HCT116 (cell line): ENCODE measurements at regions of chr15 and their contacts with region 1.

Region 1: DNA sequence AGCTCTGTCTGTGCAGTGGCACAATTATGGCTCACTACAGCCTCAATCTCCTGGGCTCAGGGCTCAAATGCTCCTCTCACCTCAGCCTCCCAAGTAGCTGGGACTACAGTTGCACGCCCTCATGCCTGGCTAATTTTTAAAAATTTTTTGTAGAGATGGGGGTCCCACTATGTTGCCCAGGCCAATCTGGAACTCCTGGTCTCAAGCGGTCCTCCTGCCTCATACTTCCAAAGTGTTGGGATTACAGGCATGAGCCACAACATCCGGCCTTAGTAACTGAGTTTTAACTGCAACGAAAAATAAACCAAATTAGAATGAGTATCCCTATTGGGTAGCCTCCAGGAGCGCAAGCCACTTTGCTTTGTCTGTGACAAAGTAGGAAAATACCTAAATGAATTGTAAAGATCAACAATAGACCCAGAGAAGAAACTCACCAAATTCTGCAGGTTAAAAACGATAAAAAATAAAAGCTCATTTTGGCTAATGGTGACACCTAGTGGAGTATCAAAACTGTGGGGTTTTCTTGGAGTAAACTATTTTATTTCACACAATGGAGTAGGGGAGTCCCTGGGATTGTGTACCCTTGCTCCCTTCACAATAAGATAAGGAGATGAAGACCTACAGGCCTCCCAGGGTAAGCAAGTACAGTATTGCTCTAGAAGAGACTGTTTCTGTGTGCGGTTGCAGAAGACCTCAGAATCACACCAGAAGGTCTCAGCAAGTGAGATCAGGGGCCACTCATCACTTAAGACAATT is 21.0 kb upstream of the CA12 start:
- DNase-seq: no peak
- ATAC-seq: peak; percentile 86
- H3K4me3 ChIP-seq: no peak overlapping the region
- H3K27ac ChIP-seq: no peak overlapping the region
- H3K4me1 ChIP-seq: peaks cover 5 to 9% of the 10 kb centered on the region in 2 experiments; a peak in 2 of 4 replicates
- H3K27me3 ChIP-seq: no peaks in the 10 kb centered on the region
- CTCF ChIP-seq: peak; percentile 50 to 76 (median 75)
- POLR2A ChIP-seq: no peak
- RAD21 ChIP-seq: peak; percentile 84

Region 2: GRCh38 chr15:62782039-62782791 is 620.5 kb before region 1 on chr15:
- CTCF ChIA-PET with region 1: no interaction called
- POLR2A ChIA-PET with region 1: no interaction called
- RAD21 ChIA-PET with region 1: no interaction called
- intact Hi-C with region 1: loop called (anchors 1 kb)
- DNase-seq: peak; percentile 56
- ATAC-seq: peak; percentile 98
- H3K4me3 ChIP-seq: no peak overlapping the region
- H3K27ac ChIP-seq: no peak overlapping the region
- H3K4me1 ChIP-seq: no peaks in the 10 kb centered on the region; a peak in 1 of 4 replicates
- H3K27me3 ChIP-seq: no peaks in the 10 kb centered on the region
- CTCF ChIP-seq: peak; percentile 63 to 76 (median 74); a peak in 5 of 6 replicates
- POLR2A ChIP-seq: no peak
- RAD21 ChIP-seq: peak; percentile 89

Region 3: DNA sequence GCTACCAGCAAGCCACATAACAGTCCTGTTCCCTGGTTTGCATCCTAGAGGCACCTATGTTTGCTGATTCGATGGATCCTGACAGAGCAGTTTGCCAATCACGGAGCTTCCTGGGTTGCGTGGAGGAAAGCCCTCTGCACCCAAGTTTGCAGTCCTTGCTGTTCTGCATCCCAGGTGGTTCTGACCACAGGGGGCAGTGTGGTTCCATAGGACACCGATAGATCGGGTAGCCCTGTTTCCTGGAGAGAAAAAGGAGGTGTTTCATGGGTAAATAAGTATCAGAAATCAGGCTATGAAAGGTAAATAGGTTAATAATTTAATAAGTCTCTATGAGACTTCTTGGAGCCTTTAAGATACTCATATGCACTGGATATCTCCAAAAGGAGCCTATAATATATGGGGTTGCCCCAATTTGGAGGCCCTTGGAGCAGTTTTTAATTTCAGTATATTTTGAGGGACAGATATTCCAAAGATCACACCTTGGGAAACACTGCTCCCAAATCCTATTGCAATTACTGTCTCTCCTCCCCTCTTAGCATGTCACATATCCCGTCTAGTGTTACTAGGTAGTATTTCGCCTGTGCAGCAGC is 554.7 kb before region 1 on chr15:
- CTCF ChIA-PET with region 1: interaction called, 3 read pairs
- POLR2A ChIA-PET with region 1: no interaction called
- RAD21 ChIA-PET with region 1: no interaction called
- intact Hi-C with region 1: loop called (anchors 5 kb)
- DNase-seq: peak; percentile 53
- ATAC-seq: peak; percentile 91
- H3K4me3 ChIP-seq: no peak overlapping the region
- H3K27ac ChIP-seq: no peak overlapping the region
- H3K4me1 ChIP-seq: peaks cover 0 to 12% of the 10 kb centered on the region in 2 experiments; a peak in 2 of 4 replicates
- H3K27me3 ChIP-seq: no peaks in the 10 kb centered on the region
- CTCF ChIP-seq: peak; percentile 83 to 93 (median 87)
- POLR2A ChIP-seq: no peak
- RAD21 ChIP-seq: peak; percentile 88

Region 4: DNA sequence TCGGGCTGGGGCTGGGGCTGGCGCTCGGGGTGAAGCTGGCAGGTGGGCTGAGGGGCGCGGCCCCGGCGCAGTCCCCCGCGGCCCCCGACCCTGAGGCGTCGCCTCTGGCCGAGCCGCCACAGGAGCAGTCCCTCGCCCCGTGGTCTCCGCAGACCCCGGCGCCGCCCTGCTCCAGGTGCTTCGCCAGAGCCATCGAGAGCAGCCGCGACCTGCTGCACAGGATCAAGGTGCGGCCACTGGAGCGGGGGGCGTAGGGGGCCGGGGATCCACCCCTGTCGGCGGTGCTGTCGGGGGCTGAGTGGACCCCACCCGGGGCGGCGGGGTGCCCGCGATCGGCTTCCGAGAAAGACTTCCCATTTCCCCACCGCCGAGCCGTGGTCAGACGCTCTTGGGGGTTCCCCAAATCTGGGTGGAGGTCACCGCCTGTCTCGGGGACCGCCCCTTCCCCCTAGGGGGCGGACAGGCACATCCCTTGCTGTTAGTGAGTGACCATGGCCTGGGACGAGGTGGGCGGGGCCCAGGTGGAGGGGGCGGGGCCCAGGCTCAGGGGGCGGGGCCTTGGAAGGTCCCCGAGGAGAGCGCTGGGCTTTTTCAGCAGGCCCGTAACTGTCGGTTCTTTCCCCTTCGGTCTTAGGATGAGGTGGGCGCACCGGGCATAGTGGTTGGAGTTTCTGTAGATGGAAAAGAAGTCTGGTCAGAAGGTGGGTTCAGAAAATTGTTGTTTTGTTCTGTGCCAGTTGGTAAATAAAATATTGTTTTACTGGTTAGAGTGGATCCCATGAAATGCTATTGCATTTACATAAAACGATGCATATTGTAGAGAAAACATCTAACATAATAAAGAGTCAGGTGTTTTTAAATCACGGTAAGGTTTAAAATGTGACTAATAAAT is 280.4 kb before region 1 on chr15:
- CTCF ChIA-PET with region 1: no interaction called
- POLR2A ChIA-PET with region 1: no interaction called
- RAD21 ChIA-PET with region 1: no interaction called
- intact Hi-C with region 1: loop called (anchors 2 kb)
- DNase-seq: peak; percentile 44
- ATAC-seq: peak; percentile 94
- H3K4me3 ChIP-seq: peak overlapping the region; percentile 60 to 76
- H3K27ac ChIP-seq: peak overlapping the region; percentile 59
- H3K4me1 ChIP-seq: peaks cover 0 to 10% of the 10 kb centered on the region in 2 experiments; a peak in 3 of 4 replicates
- H3K27me3 ChIP-seq: no peaks in the 10 kb centered on the region
- CTCF ChIP-seq: peak in 1 of 3 experiments; percentile 14; a peak in 1 of 6 replicates
- POLR2A ChIP-seq: no peak
- RAD21 ChIP-seq: no peak

Region 5: DNA sequence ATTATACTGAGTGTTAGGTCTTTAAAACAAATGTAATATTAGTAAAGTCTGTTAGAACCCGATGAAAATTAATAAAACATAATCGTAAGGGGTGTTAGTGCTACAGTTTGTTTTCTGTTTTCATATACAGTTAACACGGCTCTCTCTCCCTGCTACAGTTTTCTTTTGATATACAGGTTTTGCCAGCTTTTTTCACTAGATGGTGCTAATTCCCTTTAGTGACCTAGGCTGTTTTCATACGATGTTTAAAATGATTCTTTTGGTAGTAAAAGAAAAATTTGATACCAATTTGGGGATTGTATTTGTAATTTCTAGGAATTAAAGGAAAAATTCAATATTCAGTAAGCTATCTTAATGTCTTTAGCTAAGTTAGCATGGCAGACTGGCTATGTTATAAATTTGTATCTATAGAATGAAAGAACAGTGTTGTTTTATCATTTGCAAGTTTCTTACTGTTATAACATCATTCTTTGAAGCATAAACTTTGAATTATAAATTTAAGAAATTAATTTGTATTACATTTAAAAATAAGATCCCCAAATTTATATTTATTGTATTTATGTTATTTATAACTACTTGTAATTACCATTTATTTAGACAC is 113.8 kb before region 1 on chr15:
- CTCF ChIA-PET with region 1: interaction called, 26 read pairs
- POLR2A ChIA-PET with region 1: no interaction called
- RAD21 ChIA-PET with region 1: no interaction called
- intact Hi-C with region 1: loop called (anchors 1 kb)
- DNase-seq: peak; percentile 33
- ATAC-seq: peak; percentile 60; the same call in 1 of the 2 replicates
- H3K4me3 ChIP-seq: no peak overlapping the region
- H3K27ac ChIP-seq: no peak overlapping the region
- H3K4me1 ChIP-seq: peaks cover 0 to 7% of the 10 kb centered on the region in 2 experiments; a peak in 2 of 4 replicates
- H3K27me3 ChIP-seq: no peaks in the 10 kb centered on the region
- CTCF ChIP-seq: peak; percentile 51 to 79 (median 73)
- POLR2A ChIP-seq: no peak
- RAD21 ChIP-seq: peak; percentile 85